Vagina (tissue), 2 donors: ENCODE measurements at regions of chr17 and their contacts with region 1.

Region 1: GRCh38 chr17:61389670-61390478 is 9.8 kb upstream of the TBX2 start:
- DNase-seq: no peak
- H3K4me3 ChIP-seq: no peak overlapping the region
- H3K27ac ChIP-seq: peak overlapping the region; percentile 61
- H3K4me1 ChIP-seq: peaks cover 5% of the 10 kb centered on the region
- H3K27me3 ChIP-seq: no peaks in the 10 kb centered on the region
- CTCF ChIP-seq: peak; percentile 7 to 65 (median 63)
- POLR2A ChIP-seq: no peak

Region 2: DNA sequence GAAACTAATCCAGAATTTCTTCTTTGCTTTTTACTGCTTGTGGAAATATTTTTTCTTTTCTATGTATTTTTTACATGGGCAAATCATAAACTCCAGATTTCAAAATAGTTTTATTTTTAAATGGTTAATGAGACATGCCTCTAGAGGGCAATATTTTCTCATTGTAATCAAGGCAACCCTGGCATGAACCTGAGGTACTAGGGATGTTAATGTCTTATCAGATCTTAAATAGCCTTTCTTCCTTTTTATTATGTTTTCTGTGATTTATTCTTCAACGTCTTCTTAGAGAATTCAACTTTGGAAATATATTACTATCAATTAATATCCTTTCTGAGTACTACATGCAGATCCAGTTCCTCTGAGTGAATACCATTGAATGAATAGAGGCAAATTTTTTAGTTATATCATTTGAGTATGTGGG is 387.5 kb before region 1 on chr17:
- intact Hi-C with region 1: loop called (anchors 5 kb)
- DNase-seq: no peak
- H3K4me3 ChIP-seq: no peak overlapping the region
- H3K27ac ChIP-seq: no peak overlapping the region
- H3K4me1 ChIP-seq: no peaks in the 10 kb centered on the region
- H3K27me3 ChIP-seq: no peaks in the 10 kb centered on the region
- CTCF ChIP-seq: peak in 1 of 3 experiments; percentile 26
- POLR2A ChIP-seq: no peak

Region 3: DNA sequence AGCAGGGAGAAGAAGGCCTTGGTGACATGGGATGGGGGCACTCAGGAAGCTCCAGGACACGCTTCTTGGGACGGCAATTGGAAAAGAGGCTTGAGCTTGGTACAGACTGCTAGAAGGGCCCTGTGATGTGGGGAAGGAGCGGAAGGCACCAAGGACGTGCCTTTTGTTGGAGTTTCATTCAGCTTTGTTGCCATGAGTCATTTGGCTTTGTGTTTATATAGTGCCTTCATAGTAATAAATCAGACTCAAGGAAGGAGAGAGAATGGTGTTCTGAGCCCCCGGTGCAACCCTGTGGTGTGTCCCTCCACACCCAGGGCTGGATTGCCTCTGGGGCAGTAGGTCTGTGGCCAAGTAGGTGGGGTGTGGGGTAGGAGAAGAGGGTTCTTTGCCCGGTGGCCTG is 55.0 kb after region 1 on chr17:
- intact Hi-C with region 1: no loop called
- DNase-seq: no peak
- H3K4me3 ChIP-seq: no peak overlapping the region
- H3K27ac ChIP-seq: no peak overlapping the region
- H3K4me1 ChIP-seq: peaks cover 14% of the 10 kb centered on the region
- H3K27me3 ChIP-seq: no peaks in the 10 kb centered on the region
- CTCF ChIP-seq: no peak
- POLR2A ChIP-seq: no peak